CD8-positive, alpha-beta T cell (primary cell): ENCODE measurements at regions of chr9 and their contacts with region 1.

Region 1: GRCh38 chr9:120755827-120756434 is 37.3 kb downstream of the FBXW2 start:
- DNase-seq: peak; percentile 46 to 82 (median 70)
- ATAC-seq: peak; percentile 79
- H3K4me3 ChIP-seq: no peak overlapping the region
- H3K4me3 Mint-ChIP-seq: no peak overlapping the region
- H3K27ac ChIP-seq: no peak overlapping the region
- H3K27ac Mint-ChIP-seq: no peak overlapping the region
- H3K4me1 ChIP-seq: no peaks in the 10 kb centered on the region
- H3K4me1 Mint-ChIP-seq: no peaks in the 10 kb centered on the region
- H3K27me3 ChIP-seq: no peaks in the 10 kb centered on the region
- H3K27me3 Mint-ChIP-seq: no peaks in the 10 kb centered on the region
- CTCF ChIP-seq: peak; percentile 93

Region 2: DNA sequence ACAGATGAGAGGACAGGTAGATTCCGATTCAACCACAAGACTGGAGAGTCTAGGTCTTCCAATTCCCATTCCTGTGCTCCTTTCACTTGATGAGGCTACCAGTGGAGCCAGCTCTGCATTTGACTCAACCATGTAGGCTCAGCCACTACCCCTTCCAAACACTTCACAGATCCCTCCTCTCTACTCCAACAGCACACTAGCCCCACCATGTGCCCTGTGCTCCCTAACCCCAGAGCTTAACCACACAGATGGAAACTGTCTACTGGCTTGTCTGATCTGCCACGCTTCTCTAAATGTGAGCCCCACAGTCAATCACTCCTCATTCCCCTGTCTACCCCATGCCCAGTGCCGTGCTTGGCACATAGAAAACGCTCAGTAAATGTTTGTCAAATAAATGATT is 684.2 kb before region 1 on chr9:
- CTCF ChIA-PET with region 1: no interaction called
- POLR2A ChIA-PET with region 1: no interaction called
- intact Hi-C with region 1: no loop called
- DNase-seq: no peak
- ATAC-seq: no peak
- H3K4me3 ChIP-seq: no peak overlapping the region
- H3K4me3 Mint-ChIP-seq: no peak overlapping the region
- H3K27ac ChIP-seq: no peak overlapping the region
- H3K27ac Mint-ChIP-seq: no peak overlapping the region
- H3K4me1 ChIP-seq: no peaks in the 10 kb centered on the region
- H3K4me1 Mint-ChIP-seq: no peaks in the 10 kb centered on the region
- H3K27me3 ChIP-seq: no peaks in the 10 kb centered on the region
- H3K27me3 Mint-ChIP-seq: peaks cover 4% of the 10 kb centered on the region
- CTCF ChIP-seq: no peak

Region 3: DNA sequence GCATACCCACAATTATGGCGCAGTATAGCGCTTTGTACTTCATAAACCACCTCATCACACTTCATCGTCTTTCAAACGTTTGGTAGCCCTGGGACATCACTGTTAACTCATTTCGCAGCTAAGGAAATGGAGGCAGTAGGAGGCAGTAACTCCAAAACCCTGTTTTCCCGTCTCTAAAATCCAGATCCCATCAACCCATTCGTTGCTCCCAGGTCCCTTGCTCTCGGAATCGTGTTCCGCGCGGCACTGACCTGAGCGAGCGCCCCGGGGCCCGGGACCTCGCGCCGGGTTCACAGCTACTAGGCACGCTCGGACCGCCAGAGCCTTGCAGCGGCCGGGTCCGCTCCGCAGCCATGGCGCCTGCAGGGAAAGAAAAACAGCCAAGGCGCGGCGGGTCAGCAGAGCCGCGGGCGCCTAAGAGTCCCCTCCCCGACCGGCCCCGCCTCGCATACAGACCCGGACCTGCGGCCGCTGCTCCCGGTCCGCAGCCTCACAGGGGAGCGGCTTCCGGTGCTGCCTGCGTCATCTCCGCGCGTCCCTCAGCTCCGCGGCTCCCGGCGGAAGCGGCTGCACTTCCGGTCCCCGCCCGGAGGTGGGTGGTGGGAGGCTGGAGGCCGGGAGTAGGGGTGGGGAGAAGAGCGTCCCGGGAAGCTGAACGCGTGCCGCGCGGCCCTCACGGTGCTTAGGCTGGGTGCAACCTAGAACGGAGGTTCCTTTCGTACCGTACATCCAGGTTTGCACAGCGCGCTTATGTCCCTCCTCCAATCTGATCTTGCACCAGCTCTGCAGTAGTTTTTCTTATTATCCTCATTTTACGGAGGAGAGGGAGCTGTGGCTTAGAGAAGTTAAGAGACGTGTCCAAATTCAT is 37.2 kb after region 1 on chr9 and contains the start of gene FBXW2:
- CTCF ChIA-PET with region 1: interaction called, 11 read pairs
- POLR2A ChIA-PET with region 1: interaction called, 4 read pairs
- intact Hi-C with region 1: no loop called
- DNase-seq: peak; percentile 50 to 93 (median 84)
- ATAC-seq: peak; percentile 81
- H3K4me3 ChIP-seq: peak within 1 kb of the TSS; percentile 60 to 88
- H3K4me3 Mint-ChIP-seq: peak within 1 kb of the TSS; percentile 85
- H3K27ac ChIP-seq: peak within 1 kb of the TSS; percentile 88 to 90
- H3K27ac Mint-ChIP-seq: peak within 1 kb of the TSS; percentile 87
- H3K4me1 ChIP-seq: peaks cover 26% of the 10 kb centered on the region
- H3K4me1 Mint-ChIP-seq: peaks cover 60% of the 10 kb centered on the region
- H3K27me3 ChIP-seq: no peaks in the 10 kb centered on the region
- H3K27me3 Mint-ChIP-seq: no peaks in the 10 kb centered on the region
- CTCF ChIP-seq: no peak
- total RNA-seq, gene FBXW2: 51.9 to 54.7 TPM

Region 4: DNA sequence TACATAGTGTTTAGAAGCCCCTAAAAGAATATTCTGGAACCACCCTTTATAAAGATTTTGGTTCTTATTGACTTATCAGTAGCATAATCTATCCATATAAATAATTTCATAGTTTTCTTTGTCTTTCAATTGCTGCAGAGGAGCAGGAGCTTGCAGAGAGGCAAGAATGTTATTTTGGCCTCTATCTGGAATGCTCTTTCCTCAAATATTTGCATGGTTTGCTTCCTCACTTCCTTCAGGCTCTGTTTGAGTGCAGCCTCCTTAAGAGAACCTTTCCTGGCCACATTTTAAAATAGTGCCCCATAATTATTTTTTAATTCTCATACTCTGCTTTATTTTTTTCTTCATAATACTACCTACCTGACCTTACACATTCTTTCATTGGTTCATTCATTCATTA is 292.7 kb after region 1 on chr9:
- CTCF ChIA-PET with region 1: interaction called, 12 read pairs
- POLR2A ChIA-PET with region 1: interaction called, 6 read pairs
- intact Hi-C with region 1: no loop called
- DNase-seq: no peak
- ATAC-seq: no peak
- H3K4me3 ChIP-seq: no peak overlapping the region
- H3K4me3 Mint-ChIP-seq: no peak overlapping the region
- H3K27ac ChIP-seq: no peak overlapping the region
- H3K27ac Mint-ChIP-seq: no peak overlapping the region
- H3K4me1 ChIP-seq: no peaks in the 10 kb centered on the region
- H3K4me1 Mint-ChIP-seq: no peaks in the 10 kb centered on the region
- H3K27me3 ChIP-seq: peaks cover 0 to 2% of the 10 kb centered on the region in 2 experiments
- H3K27me3 Mint-ChIP-seq: no peaks in the 10 kb centered on the region
- CTCF ChIP-seq: no peak

Region 5: DNA sequence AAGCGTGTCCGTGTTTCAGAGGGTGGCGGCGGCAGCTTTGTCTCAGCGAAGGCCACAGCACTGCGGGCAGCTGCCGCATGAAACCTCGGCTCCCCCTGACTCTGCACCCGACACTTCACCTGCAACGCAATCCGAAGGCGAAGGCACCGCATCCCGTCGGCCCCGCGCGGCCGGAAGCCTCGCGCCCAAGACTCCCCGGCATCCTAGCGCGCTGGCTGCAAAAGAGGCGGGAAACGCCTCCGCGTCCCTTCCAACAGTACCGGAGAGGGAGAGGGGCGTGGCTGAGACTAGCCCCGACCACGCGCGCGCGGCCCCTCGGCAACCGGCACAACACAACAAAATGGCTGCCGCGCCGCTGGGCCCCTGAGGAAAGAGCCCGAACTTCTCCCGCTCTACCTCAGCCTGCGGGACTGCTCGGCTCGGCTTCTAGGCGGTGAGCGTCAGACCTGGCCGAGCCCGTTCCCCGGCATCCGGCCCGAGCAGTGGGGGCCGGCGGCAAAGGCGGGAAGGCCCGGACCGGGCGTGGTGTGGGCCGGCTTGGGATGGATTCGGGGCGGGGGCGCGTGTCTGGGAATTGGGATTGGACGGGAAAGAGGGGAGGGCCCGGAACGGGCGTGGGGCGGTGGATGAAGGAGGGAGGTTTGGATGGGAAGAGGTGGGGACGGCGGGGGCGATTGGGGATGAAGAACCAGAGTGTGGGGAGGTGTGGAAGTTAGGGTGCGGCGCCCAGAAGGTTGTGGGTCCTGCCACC is 318.9 kb after region 1 on chr9 and contains the start of gene CNTRL:
- CTCF ChIA-PET with region 1: interaction called, 25 read pairs
- POLR2A ChIA-PET with region 1: interaction called, 3 read pairs
- intact Hi-C with region 1: loop called (anchors 1 kb)
- DNase-seq: peak; percentile 62 to 91 (median 85)
- ATAC-seq: peak; percentile 83
- H3K4me3 ChIP-seq: peak within 1 kb of the TSS; percentile 78 to 80
- H3K4me3 Mint-ChIP-seq: peak within 1 kb of the TSS; percentile 98
- H3K27ac ChIP-seq: peak within 1 kb of the TSS; percentile 77 to 80
- H3K27ac Mint-ChIP-seq: peak within 1 kb of the TSS; percentile 95
- H3K4me1 ChIP-seq: peaks cover 19% of the 10 kb centered on the region
- H3K4me1 Mint-ChIP-seq: peaks cover 43% of the 10 kb centered on the region
- H3K27me3 ChIP-seq: no peaks in the 10 kb centered on the region
- H3K27me3 Mint-ChIP-seq: no peaks in the 10 kb centered on the region
- CTCF ChIP-seq: no peak
- total RNA-seq, gene CNTRL: 29.8 to 30.8 TPM

Region 6: GRCh38 chr9:121376214-121376830 is 620.4 kb after region 1 on chr9:
- CTCF ChIA-PET with region 1: no interaction called
- POLR2A ChIA-PET with region 1: no interaction called
- intact Hi-C with region 1: loop called in 1 of 2 experiments (anchors 5 kb)
- DNase-seq: peak in 2 of 9 experiments; percentile 43 to 60
- ATAC-seq: no peak
- H3K4me3 ChIP-seq: no peak overlapping the region
- H3K4me3 Mint-ChIP-seq: no peak overlapping the region
- H3K27ac ChIP-seq: no peak overlapping the region
- H3K27ac Mint-ChIP-seq: no peak overlapping the region
- H3K4me1 ChIP-seq: no peaks in the 10 kb centered on the region
- H3K4me1 Mint-ChIP-seq: peaks cover 22% of the 10 kb centered on the region
- H3K27me3 ChIP-seq: no peaks in the 10 kb centered on the region
- H3K27me3 Mint-ChIP-seq: no peaks in the 10 kb centered on the region
- CTCF ChIP-seq: peak; percentile 61